Calu3 (cell line): ENCODE measurements at regions of chr9 and their contacts with region 1.

Region 1: GRCh38 chr9:76044266-76044819 is 153.9 kb downstream of the PCSK5 start:
- DNase-seq: no peak
- H3K4me3 Mint-ChIP-seq: no peak overlapping the region
- H3K27ac Mint-ChIP-seq: no peak overlapping the region
- H3K4me1 Mint-ChIP-seq: peaks cover 8% of the 10 kb centered on the region
- H3K27me3 Mint-ChIP-seq: no peaks in the 10 kb centered on the region
- CTCF ChIP-seq: no peak

Region 2: GRCh38 chr9:76013809-76014208 is 30.5 kb before region 1 on chr9:
- CTCF ChIA-PET with region 1: no interaction called
- intact Hi-C with region 1: loop called (anchors 5 kb)
- DNase-seq: no peak
- H3K4me3 Mint-ChIP-seq: no peak overlapping the region
- H3K27ac Mint-ChIP-seq: no peak overlapping the region
- H3K4me1 Mint-ChIP-seq: peaks cover 12% of the 10 kb centered on the region
- H3K27me3 Mint-ChIP-seq: no peaks in the 10 kb centered on the region
- CTCF ChIP-seq: no peak

Region 3: DNA sequence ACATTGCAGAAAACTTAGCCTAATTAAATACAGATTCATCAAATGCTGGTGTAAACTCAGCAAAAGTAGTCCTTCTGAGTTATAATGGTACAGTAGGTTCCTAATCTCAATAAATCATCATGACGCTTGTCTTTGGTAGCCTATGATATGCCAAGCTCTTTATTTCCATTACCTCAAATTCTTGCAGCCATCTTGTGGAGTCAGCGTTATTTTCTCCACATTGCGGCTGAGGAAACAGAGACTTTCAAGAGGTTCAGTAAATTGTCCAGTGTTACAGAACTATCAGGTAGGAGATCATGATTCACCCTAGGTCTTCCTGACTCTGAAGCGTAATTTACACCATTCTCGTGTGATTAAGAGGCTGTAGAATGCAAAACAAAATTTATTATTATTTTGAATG is 83.3 kb after region 1 on chr9:
- CTCF ChIA-PET with region 1: no interaction called
- intact Hi-C with region 1: loop called (anchors 10 kb)
- DNase-seq: no peak
- H3K4me3 Mint-ChIP-seq: no peak overlapping the region
- H3K27ac Mint-ChIP-seq: no peak overlapping the region
- H3K4me1 Mint-ChIP-seq: no peaks in the 10 kb centered on the region
- H3K27me3 Mint-ChIP-seq: no peaks in the 10 kb centered on the region
- CTCF ChIP-seq: no peak